WTC11 (cell line): ENCODE measurements at regions of chr4 and their contacts with region 1.

Region 1: GRCh38 chr4:16205298-16206164 is 20.7 kb downstream of the TAPT1 start:
- DNase-seq: no peak
- ATAC-seq: peak; percentile 76
- H3K4me3 Mint-ChIP-seq: no peak overlapping the region
- H3K27ac Mint-ChIP-seq: no peak overlapping the region
- H3K4me1 Mint-ChIP-seq: peaks cover 19% of the 10 kb centered on the region
- H3K27me3 Mint-ChIP-seq: no peaks in the 10 kb centered on the region
- CTCF ChIP-seq: peak; percentile 66

Region 2: DNA sequence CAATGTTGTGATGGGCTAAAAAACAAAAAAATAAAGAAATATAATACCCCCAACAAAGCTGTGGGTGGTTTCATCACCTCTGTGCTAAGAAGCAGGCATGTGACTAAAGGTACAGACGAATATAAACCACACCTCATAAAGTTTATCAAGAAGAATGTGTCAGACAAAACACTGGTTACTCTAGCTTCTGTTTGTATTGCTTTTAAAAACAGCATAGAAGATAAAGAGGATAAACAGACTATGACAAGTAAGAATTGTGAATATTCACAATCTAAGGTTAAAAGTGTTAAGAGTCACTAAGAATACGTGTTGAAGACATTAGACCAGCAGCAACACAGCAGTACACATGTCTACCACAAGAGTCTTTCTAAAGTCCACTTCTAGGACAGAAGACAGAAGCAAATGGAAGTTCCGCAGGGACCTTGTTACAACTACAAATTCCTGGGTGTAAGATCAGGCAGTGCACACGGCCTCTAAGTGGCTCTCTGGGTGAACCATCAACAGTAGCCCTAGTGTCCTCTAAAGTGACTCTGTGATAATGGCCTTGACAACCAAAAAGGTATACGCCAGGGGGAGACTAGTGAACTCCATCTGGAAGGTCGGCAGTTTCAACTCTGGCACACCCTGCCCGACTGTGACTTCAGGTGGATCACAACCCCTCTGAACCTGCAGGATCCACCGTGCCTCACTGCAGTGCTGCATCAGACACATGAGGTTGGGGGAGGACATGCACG is 234.3 kb before region 1 on chr4:
- CTCF ChIA-PET with region 1: no interaction called
- POLR2A ChIA-PET with region 1: no interaction called
- DNase-seq: no peak
- ATAC-seq: no peak
- H3K4me3 Mint-ChIP-seq: no peak overlapping the region
- H3K27ac Mint-ChIP-seq: no peak overlapping the region
- H3K4me1 Mint-ChIP-seq: peaks cover 8% of the 10 kb centered on the region
- H3K27me3 Mint-ChIP-seq: no peaks in the 10 kb centered on the region
- CTCF ChIP-seq: no peak

Region 3: GRCh38 chr4:16052939-16053338 is 152.6 kb before region 1 on chr4:
- CTCF ChIA-PET with region 1: no interaction called
- POLR2A ChIA-PET with region 1: no interaction called
- DNase-seq: no peak
- ATAC-seq: no peak
- H3K4me3 Mint-ChIP-seq: no peak overlapping the region
- H3K27ac Mint-ChIP-seq: no peak overlapping the region
- H3K4me1 Mint-ChIP-seq: peaks cover 28% of the 10 kb centered on the region
- H3K27me3 Mint-ChIP-seq: no peaks in the 10 kb centered on the region
- CTCF ChIP-seq: no peak

Region 4: GRCh38 chr4:16082426-16083240 is 122.9 kb before region 1 on chr4:
- CTCF ChIA-PET with region 1: interaction called, 16 read pairs
- POLR2A ChIA-PET with region 1: interaction called, 3 read pairs
- DNase-seq: peak; percentile 93
- ATAC-seq: peak; percentile 75
- H3K4me3 Mint-ChIP-seq: peak overlapping the region; percentile 87
- H3K27ac Mint-ChIP-seq: peak overlapping the region; percentile 35; the same call in 1 of the 2 replicates
- H3K4me1 Mint-ChIP-seq: peaks cover 44% of the 10 kb centered on the region
- H3K27me3 Mint-ChIP-seq: peaks cover 43% of the 10 kb centered on the region
- CTCF ChIP-seq: no peak

Region 5: GRCh38 chr4:16183604-16184003 is 21.9 kb before region 1 on chr4:
- CTCF ChIA-PET with region 1: interaction called, 13 read pairs
- POLR2A ChIA-PET with region 1: no interaction called
- DNase-seq: no peak
- ATAC-seq: no peak
- H3K4me3 Mint-ChIP-seq: no peak overlapping the region
- H3K27ac Mint-ChIP-seq: no peak overlapping the region
- H3K4me1 Mint-ChIP-seq: peaks cover 11% of the 10 kb centered on the region
- H3K27me3 Mint-ChIP-seq: no peaks in the 10 kb centered on the region
- CTCF ChIP-seq: no peak

Region 6: GRCh38 chr4:16264798-16265197 is 59.3 kb after region 1 on chr4:
- CTCF ChIA-PET with region 1: interaction called, 19 read pairs
- POLR2A ChIA-PET with region 1: no interaction called
- DNase-seq: no peak
- ATAC-seq: no peak
- H3K4me3 Mint-ChIP-seq: no peak overlapping the region
- H3K27ac Mint-ChIP-seq: no peak overlapping the region
- H3K4me1 Mint-ChIP-seq: no peaks in the 10 kb centered on the region
- H3K27me3 Mint-ChIP-seq: no peaks in the 10 kb centered on the region
- CTCF ChIP-seq: no peak

Region 7: GRCh38 chr4:16315456-16315855 is 109.9 kb after region 1 on chr4:
- CTCF ChIA-PET with region 1: no interaction called
- POLR2A ChIA-PET with region 1: no interaction called
- DNase-seq: no peak
- ATAC-seq: no peak
- H3K4me3 Mint-ChIP-seq: no peak overlapping the region
- H3K27ac Mint-ChIP-seq: no peak overlapping the region
- H3K4me1 Mint-ChIP-seq: peaks cover 8% of the 10 kb centered on the region; the same call in 1 of the 2 replicates
- H3K27me3 Mint-ChIP-seq: no peaks in the 10 kb centered on the region
- CTCF ChIP-seq: no peak

Region 8: DNA sequence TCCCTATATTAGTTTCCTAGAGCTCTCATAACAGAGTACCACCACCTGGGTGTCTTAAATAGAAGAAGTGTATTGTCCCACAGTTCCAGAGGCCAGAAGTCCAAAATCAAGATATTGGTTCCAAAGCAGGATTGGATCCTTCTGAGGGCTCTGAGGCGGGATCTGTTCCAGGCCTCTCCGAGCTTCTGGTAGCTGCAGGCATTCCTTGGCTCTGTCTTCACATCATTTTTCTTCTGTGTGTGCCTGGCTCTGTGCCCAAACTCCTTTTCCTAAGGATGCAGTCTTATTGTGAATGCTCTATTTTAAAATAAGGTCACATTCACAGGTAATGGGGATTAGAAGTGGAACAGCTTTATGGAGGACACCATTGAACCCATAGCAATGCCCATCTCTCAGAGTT is 274.5 kb after region 1 on chr4:
- CTCF ChIA-PET with region 1: no interaction called
- POLR2A ChIA-PET with region 1: no interaction called
- DNase-seq: no peak
- ATAC-seq: no peak
- H3K4me3 Mint-ChIP-seq: no peak overlapping the region
- H3K27ac Mint-ChIP-seq: no peak overlapping the region
- H3K4me1 Mint-ChIP-seq: no peaks in the 10 kb centered on the region
- H3K27me3 Mint-ChIP-seq: no peaks in the 10 kb centered on the region; the same call in 1 of the 2 replicates
- CTCF ChIP-seq: no peak